ENCODE measurements at regions of chr17 and their contacts with region 1.

Region 1: GRCh38 chr17:69501591-69502468 is 87.3 kb downstream of the MAP2K6 start:
- DNase-seq: peak; percentile 51
- H3K4me3 Mint-ChIP-seq: peak overlapping the region; percentile 80
- H3K27ac Mint-ChIP-seq: peak overlapping the region; percentile 78
- H3K4me1 Mint-ChIP-seq: peaks cover 41% of the 10 kb centered on the region
- H3K27me3 Mint-ChIP-seq: no peaks in the 10 kb centered on the region
- CTCF ChIP-seq: no peak

Region 2: DNA sequence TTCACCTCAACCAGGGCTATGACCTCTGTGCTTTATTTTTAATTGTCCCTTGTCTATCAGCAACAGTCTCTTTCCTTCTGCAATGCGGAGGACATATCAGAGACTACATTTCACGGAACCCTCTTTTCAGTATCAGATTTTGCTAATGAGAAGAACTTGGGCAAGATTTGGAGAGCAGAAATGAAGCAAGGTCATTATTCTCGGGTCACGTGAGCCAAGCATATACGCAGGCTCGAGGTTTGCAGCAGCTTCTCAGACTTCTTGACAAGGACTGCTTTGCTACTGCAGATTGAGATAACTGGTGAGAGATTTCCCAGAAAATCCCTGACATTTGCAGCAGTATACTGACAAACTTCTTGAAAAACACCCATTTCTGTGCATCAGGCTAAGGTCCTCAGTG is 303.6 kb before region 1 on chr17:
- CTCF ChIA-PET with region 1: no interaction called
- intact Hi-C with region 1: no loop called
- DNase-seq: no peak
- H3K4me3 Mint-ChIP-seq: no peak overlapping the region
- H3K27ac Mint-ChIP-seq: no peak overlapping the region
- H3K4me1 Mint-ChIP-seq: no peaks in the 10 kb centered on the region
- H3K27me3 Mint-ChIP-seq: no peaks in the 10 kb centered on the region
- CTCF ChIP-seq: no peak

Region 3: DNA sequence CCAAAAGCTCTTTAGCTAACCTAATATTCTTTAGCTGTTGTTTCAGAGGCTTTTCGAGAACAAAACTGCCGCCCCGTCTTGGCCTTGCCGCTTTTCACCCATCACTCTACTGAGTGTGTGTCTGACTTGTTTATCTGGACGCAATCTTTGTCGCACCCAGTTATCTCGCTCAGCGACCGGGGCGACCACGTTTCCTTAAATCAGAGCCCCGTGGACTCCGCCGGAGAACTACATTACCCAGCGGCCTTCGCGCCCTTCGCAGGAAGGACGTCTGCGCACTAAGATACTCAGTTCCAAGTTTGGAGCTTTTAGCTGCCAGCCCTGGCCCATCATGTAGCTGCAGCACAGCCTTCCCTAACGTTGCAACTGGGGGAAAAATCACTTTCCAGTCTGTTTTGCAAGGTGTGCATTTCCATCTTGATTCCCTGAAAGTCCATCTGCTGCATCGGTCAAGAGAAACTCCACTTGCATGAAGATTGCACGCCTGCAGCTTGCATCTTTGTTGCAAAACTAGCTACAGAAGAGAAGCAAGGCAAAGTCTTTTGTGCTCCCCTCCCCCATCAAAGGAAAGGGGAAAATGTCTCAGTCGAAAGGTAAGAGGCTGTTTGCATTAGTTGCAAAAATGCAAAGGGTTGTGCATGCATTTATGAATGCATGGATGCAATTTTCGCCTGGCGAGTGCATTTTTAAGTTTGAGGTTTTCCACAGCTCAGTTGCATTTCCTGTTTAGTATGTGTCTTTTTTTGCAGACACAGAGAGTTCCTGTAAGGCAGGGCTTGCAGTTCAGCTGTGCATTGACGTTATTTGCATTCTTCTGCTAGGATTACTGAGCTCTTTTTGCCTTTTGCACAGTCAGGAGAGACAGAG is 87.2 kb before region 1 on chr17 and contains the start of gene MAP2K6:
- CTCF ChIA-PET with region 1: interaction called, 3 read pairs
- intact Hi-C with region 1: loop called (anchors 5 kb)
- DNase-seq: peak; percentile 74
- H3K4me3 Mint-ChIP-seq: no peak within 1 kb of the TSS
- H3K27ac Mint-ChIP-seq: no peak within 1 kb of the TSS
- H3K4me1 Mint-ChIP-seq: no peaks in the 10 kb centered on the region
- H3K27me3 Mint-ChIP-seq: no peaks in the 10 kb centered on the region
- CTCF ChIP-seq: no peak
- total RNA-seq, gene MAP2K6: 8.3 and 13.0 TPM in 2 replicates

Region 4: DNA sequence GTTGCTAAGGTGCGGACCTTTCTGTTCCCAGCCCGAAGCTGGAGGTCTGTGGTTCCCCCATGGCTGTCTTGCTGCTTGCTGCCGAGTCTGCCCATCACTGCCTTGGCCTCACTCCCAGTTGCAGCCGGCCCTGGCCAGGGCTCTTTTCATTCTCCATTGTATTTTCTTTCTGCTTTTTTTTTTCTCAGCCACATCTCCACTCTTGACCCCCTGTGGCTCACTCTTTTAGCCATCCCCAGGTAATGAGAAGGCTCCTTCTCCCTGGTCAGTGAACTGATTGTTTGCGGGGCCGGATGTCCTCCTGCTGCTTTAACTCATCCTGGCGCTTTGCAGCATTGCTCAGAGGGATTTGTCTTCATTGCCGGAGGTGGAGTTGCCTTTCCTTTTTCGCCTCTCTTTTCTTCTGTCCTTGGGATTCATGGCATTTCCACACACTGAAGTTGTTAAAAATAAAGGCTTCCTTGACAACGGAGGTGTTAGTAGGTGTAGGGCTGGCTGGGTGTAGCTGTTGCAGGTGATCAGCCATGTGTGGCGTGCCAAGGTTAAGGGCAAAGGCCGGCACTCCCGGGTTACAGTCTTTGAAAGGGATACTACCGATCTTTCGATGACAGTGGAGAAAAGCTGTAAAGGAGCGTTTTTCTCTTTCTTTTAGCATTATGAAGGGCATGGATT is 53.3 kb before region 1 on chr17:
- CTCF ChIA-PET with region 1: no interaction called
- intact Hi-C with region 1: no loop called
- DNase-seq: no peak
- H3K4me3 Mint-ChIP-seq: no peak overlapping the region
- H3K27ac Mint-ChIP-seq: no peak overlapping the region
- H3K4me1 Mint-ChIP-seq: peaks cover 8% of the 10 kb centered on the region
- H3K27me3 Mint-ChIP-seq: no peaks in the 10 kb centered on the region
- CTCF ChIP-seq: no peak

Region 5: DNA sequence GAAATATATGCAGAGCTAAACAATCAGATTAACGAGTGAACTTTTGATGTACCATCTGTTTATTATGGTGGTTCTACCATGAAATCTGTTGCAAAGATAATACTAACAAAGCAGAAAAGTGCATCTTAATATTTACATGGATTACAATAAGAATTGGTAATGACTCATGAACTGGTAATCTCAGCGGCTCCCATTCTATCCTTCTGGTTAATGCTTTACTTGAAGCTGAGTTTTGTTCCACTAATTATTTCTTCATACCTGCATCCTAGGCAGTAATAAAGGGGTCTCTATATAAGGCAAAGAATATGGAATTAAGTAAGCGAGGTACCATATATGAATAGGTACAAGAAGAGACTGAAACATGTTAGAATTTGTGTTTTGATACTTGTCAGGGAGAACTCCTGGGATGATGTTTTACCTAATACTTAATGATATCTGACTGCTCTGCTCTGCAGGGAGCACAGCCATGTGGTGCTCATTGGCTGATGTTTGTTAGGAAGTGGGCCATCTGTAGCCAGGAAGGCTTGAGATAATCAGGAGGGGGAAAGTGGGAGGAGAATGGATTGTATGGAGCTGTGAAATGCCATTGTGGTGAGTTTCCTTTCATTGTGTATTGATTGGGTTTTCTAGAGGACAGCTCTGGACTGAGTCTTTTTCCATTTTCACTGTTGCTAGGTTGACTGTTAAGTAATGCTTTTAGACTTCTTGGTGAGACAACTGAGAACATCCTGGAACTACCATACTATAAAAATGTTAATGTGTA is 34.7 kb before region 1 on chr17:
- CTCF ChIA-PET with region 1: interaction called, 8 read pairs
- intact Hi-C with region 1: loop called (anchors 2 kb)
- DNase-seq: peak; percentile 46
- H3K4me3 Mint-ChIP-seq: peak overlapping the region; percentile 45
- H3K27ac Mint-ChIP-seq: peak overlapping the region; percentile 84
- H3K4me1 Mint-ChIP-seq: peaks cover 33% of the 10 kb centered on the region
- H3K27me3 Mint-ChIP-seq: no peaks in the 10 kb centered on the region
- CTCF ChIP-seq: no peak

Measured in Calu3 (cell line).